ENCODE measurements at regions of chr5 and their contacts with region 1.

Region 1: GRCh38 chr5:34957857-34958690 is 28.7 kb downstream of the DNAJC21 start:
- DNase-seq: peak; percentile 14
- ATAC-seq: peak; percentile 56
- H3K4me3 Mint-ChIP-seq: no peak overlapping the region
- H3K27ac Mint-ChIP-seq: peak overlapping the region; percentile 67
- H3K4me1 Mint-ChIP-seq: peaks cover 13% of the 10 kb centered on the region
- H3K27me3 Mint-ChIP-seq: no peaks in the 10 kb centered on the region

Region 2: GRCh38 chr5:33736510-33736909 is 1221.6 kb before region 1 on chr5:
- CTCF ChIA-PET with region 1: no interaction called
- POLR2A ChIA-PET with region 1: no interaction called
- intact Hi-C with region 1: no loop called
- DNase-seq: no peak
- ATAC-seq: no peak
- H3K4me3 Mint-ChIP-seq: no peak overlapping the region
- H3K27ac Mint-ChIP-seq: no peak overlapping the region
- H3K4me1 Mint-ChIP-seq: no peaks in the 10 kb centered on the region
- H3K27me3 Mint-ChIP-seq: peaks cover 5% of the 10 kb centered on the region

Region 3: GRCh38 chr5:34923694-34924461 is 34.2 kb before region 1 on chr5:
- CTCF ChIA-PET with region 1: no interaction called
- POLR2A ChIA-PET with region 1: no interaction called
- intact Hi-C with region 1: no loop called
- DNase-seq: peak; percentile 60
- ATAC-seq: peak; percentile 95
- H3K4me3 Mint-ChIP-seq: peak overlapping the region; percentile 18
- H3K27ac Mint-ChIP-seq: peak overlapping the region; percentile 64
- H3K4me1 Mint-ChIP-seq: peaks cover 37% of the 10 kb centered on the region
- H3K27me3 Mint-ChIP-seq: no peaks in the 10 kb centered on the region

Region 4: GRCh38 chr5:34970552-34970951 is 12.5 kb after region 1 on chr5:
- CTCF ChIA-PET with region 1: no interaction called
- POLR2A ChIA-PET with region 1: no interaction called
- intact Hi-C with region 1: no loop called
- DNase-seq: no peak
- ATAC-seq: no peak
- H3K4me3 Mint-ChIP-seq: no peak overlapping the region
- H3K27ac Mint-ChIP-seq: no peak overlapping the region
- H3K4me1 Mint-ChIP-seq: no peaks in the 10 kb centered on the region
- H3K27me3 Mint-ChIP-seq: peaks cover 3% of the 10 kb centered on the region

Region 5: GRCh38 chr5:35003018-35003957 is 45.2 kb after region 1 on chr5:
- CTCF ChIA-PET with region 1: interaction called, 5 read pairs
- POLR2A ChIA-PET with region 1: no interaction called
- intact Hi-C with region 1: loop called (anchors 1 to 2 kb)
- DNase-seq: peak; percentile 79
- ATAC-seq: peak; percentile 72
- H3K4me3 Mint-ChIP-seq: no peak overlapping the region
- H3K27ac Mint-ChIP-seq: no peak overlapping the region
- H3K4me1 Mint-ChIP-seq: no peaks in the 10 kb centered on the region
- H3K27me3 Mint-ChIP-seq: peaks cover 20% of the 10 kb centered on the region